Activated CD4-positive, alpha-beta T cell treated with anti-CD3 and anti-CD28 coated beads for 36 hours (primary cell): ENCODE measurements at regions of chr14 and their contacts with region 1.

Region 1: GRCh38 chr14:105045710-105046326 is 19.4 kb downstream of the GPR132 start:
- DNase-seq: peak; percentile 96
- ATAC-seq: peak; percentile 89
- H3K4me3 Mint-ChIP-seq: no peak overlapping the region
- H3K27ac Mint-ChIP-seq: peak overlapping the region; percentile 25
- H3K4me1 Mint-ChIP-seq: peaks cover 14% of the 10 kb centered on the region
- H3K27me3 Mint-ChIP-seq: peaks cover 9% of the 10 kb centered on the region

Region 2: DNA sequence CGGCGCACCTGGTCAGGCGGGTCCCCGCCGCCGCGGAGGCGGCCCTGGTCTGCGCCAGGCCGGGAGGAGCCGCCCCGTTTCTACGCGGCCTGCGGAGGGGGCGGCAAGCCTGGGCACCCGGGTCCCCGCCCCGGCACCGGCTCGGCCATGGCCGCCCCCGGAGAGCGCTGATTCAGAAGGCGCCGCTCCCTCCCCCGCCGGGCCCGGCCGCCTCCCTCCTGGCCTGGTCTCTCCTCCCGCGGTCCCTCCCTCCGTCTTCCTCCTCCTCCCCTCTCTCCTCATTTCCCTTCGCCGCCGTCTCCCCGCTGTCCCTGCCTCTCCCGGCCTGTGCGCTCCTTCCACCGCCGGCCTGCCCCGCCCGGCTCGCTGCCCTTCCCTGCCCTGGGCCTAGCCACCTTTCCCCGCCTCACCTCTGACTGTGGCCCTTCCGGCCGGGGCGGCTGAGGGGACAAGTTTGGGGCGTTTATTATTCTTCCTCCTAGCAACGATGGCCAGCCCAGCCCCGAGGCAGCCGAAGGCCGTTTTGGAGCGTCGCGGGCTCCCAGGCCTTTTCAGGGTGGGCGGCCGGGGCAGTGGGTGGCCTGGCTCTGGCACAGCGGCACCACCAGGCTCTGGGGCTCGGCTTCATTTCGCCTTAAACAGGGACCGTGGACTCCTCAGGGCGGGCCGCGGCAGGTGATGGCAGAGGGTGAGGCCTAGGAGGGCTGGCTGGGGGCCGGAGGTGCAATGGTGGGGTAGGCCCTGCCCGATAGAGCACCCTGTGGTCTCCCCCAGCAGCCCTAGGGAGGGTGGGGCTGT is 180.0 kb before region 1 on chr14:
- CTCF ChIA-PET with region 1: no interaction called
- POLR2A ChIA-PET with region 1: no interaction called
- intact Hi-C with region 1: no loop called
- DNase-seq: peak; percentile 62
- ATAC-seq: peak; percentile 57
- H3K4me3 Mint-ChIP-seq: peak overlapping the region; percentile 60
- H3K27ac Mint-ChIP-seq: no peak overlapping the region
- H3K4me1 Mint-ChIP-seq: peaks cover 2% of the 10 kb centered on the region
- H3K27me3 Mint-ChIP-seq: peaks cover 7% of the 10 kb centered on the region

Region 3: DNA sequence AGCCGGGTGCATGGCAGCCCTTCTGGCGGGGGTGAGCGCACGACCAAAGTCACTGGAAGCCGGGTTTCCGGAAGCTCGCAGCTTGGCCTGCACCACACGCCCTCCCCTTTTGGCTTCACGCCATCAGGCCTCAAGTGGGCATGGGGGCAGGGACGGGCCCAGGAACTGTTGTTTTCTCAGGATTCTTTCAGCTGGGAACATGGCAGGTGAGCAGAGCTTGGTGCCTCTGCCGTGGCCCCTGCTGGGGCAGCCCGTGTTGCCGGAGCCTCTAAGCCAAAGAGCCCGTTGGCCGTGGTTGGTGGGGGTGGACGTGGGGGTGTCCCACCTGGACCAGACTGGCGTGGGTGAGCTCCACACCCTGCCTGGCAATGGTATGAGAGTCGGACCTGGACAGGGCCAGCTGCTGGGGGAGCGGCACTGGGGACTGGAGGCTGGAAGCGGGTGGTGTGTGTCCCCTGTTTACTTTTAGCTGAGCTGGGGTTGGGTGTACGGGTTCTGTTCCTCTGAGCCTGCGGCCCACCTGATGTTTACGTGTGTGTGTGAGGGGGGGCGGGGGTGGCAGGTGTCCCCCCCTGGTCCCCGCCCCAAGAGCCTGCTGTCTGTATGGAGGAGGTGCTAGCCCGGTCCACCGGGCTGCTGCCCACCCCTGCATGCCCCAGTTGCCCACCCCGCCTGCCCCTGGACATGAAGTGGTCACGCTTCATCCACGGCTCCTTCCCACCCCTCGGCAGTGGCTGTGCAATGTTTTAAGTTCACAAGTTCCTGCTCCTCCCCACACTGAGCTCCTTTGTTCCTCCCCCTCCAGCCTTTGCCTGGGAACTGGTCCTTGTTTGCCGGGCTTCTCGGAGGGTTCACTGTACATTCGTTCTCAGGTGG is 149.8 kb before region 1 on chr14:
- CTCF ChIA-PET with region 1: no interaction called
- POLR2A ChIA-PET with region 1: no interaction called
- intact Hi-C with region 1: loop called (anchors 1 to 2 kb)
- DNase-seq: peak; percentile 5
- ATAC-seq: no peak
- H3K4me3 Mint-ChIP-seq: no peak overlapping the region
- H3K27ac Mint-ChIP-seq: no peak overlapping the region
- H3K4me1 Mint-ChIP-seq: peaks cover under 1% of the 10 kb centered on the region
- H3K27me3 Mint-ChIP-seq: no peaks in the 10 kb centered on the region

Region 4: DNA sequence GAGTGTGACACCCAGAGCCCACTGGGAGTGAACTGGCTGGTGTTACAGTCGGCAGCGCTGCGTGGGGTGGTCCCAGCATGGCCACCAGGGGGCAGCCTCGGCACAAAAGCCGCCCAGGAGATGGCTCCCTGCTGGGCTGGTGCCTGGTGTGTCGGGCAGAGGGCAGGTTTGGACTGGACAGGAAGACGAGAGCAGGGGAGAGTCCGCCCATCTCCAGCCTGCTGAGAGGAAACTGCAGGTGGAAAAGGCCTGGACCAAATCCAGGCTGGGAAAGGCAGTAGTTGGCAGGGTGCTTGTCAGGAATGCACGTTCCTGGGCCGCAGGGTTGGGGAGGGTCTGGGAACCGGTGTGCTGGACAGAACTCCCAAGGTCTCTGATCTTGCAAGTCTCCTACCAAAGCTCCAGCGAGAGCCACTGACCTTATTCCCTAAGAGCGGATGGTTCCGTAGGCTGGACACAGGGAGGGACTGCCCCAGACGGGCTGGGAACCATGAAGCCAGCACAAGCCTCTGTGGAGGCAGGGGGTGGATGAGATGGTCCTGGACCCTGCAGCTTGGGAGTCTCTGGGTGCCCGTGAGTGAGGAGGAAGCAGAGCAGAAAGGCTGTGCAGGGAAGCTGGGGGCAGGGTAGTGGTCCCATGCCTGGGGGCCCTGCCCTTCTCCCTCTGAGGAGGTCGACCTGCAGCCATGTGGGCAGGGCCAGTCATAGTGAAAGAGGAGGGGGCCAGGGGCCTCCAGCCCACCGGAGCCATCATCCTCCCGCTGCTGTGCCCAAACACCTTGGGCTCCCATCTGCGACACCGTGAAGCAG is 69.4 kb before region 1 on chr14:
- CTCF ChIA-PET with region 1: interaction called, 70 read pairs
- POLR2A ChIA-PET with region 1: no interaction called
- intact Hi-C with region 1: loop called (anchors 1 kb)
- DNase-seq: peak; percentile 92
- ATAC-seq: peak; percentile 86
- H3K4me3 Mint-ChIP-seq: peak overlapping the region; percentile 19
- H3K27ac Mint-ChIP-seq: no peak overlapping the region
- H3K4me1 Mint-ChIP-seq: peaks cover 6% of the 10 kb centered on the region
- H3K27me3 Mint-ChIP-seq: peaks cover 16% of the 10 kb centered on the region

Region 5: GRCh38 chr14:105026803-105027563 is 18.8 kb before region 1 on chr14:
- CTCF ChIA-PET with region 1: interaction called, 15 read pairs
- POLR2A ChIA-PET with region 1: no interaction called
- intact Hi-C with region 1: loop called in 1 of 2 experiments (anchors 1 kb)
- DNase-seq: no peak
- ATAC-seq: no peak
- H3K4me3 Mint-ChIP-seq: no peak overlapping the region
- H3K27ac Mint-ChIP-seq: peak overlapping the region; percentile 11
- H3K4me1 Mint-ChIP-seq: peaks cover 43% of the 10 kb centered on the region
- H3K27me3 Mint-ChIP-seq: no peaks in the 10 kb centered on the region

Region 6: GRCh38 chr14:105059035-105059924 is 13.5 kb after region 1 on chr14:
- CTCF ChIA-PET with region 1: interaction called, 22 read pairs
- POLR2A ChIA-PET with region 1: no interaction called
- intact Hi-C with region 1: no loop called
- DNase-seq: peak; percentile 83
- ATAC-seq: peak; percentile 67
- H3K4me3 Mint-ChIP-seq: peak overlapping the region; percentile 92
- H3K27ac Mint-ChIP-seq: peak overlapping the region; percentile 88
- H3K4me1 Mint-ChIP-seq: peaks cover 48% of the 10 kb centered on the region
- H3K27me3 Mint-ChIP-seq: no peaks in the 10 kb centered on the region

Region 7: DNA sequence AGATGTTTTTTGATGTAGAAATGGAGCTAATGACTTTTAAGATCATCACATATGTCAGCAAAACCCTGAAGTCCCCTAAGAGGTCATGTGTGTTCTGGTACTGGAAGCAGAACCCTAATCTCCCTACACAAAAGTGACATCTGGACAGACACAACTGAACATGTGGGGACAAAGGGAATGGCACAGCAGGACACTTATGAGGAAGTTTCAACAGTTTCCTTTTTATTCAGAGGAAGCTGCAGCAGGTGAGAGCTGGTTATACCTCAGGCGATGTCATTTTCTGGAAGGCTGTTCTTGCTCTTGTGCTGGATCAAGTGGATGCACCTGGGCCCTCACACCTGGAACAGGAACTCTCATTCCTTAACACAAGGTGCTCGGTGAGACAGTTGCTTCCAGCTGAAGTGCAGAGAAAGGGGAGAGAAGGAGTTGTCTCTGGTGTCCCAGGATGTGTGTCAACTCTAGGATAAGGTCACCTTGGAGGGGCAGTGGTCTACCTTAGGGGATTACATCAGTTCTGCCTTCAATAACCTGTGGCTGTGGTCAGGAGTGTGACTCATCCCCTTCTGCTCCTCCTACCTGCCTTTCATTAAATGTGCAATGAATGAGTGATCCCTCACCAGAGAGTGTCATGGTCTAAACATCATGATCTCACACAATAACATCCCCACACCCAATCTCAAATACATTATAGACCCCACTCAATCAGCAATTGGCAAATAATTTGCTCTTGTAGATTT is 943.9 kb after region 1 on chr14:
- CTCF ChIA-PET with region 1: no interaction called
- POLR2A ChIA-PET with region 1: no interaction called
- intact Hi-C with region 1: no loop called
- DNase-seq: peak; percentile 75
- ATAC-seq: peak; percentile 67
- H3K4me3 Mint-ChIP-seq: no peak overlapping the region
- H3K27ac Mint-ChIP-seq: peak overlapping the region; percentile 85
- H3K4me1 Mint-ChIP-seq: peaks cover 58% of the 10 kb centered on the region
- H3K27me3 Mint-ChIP-seq: no peaks in the 10 kb centered on the region